Dorsolateral prefrontal cortex (tissue), 120 donors: ENCODE measurements at regions of chr5 and their contacts with region 1.

Region 1: DNA sequence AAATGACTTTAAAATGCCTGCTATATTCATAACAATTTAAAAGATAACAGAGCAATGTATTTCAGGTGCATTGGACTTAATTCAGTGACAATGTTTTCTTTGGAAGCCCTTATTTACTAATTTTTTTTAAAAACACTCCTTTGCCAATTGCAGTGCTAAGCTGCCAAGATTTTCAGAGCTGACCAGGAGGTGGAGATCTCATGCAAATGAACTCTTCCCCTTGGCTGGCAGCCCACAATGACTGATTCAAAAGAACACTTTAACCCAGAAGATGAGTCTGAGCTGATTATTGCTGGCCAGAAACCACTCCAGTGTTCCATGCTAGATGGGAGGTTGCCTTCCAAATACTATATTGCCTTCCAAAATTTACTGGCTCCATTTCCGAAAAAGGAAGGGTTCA is 128.3 kb upstream of the CCNH start:
- DNase-seq: peak; percentile 38 to 95 (median 79)
- H3K4me3 ChIP-seq: peak overlapping the region in 49 of 59 donors; percentile 0 to 55 (median 28)
- H3K27ac ChIP-seq: peak overlapping the region in 53 of 59 donors; percentile 12 to 77 (median 62)
- H3K27me3 ChIP-seq: no peaks in the 10 kb centered on the region
- CTCF ChIP-seq: peak in 54 of 56 donors; percentile 22 to 77 (median 57)

Region 2: GRCh38 chr5:87432460-87432859 is 108.6 kb before region 1 on chr5:
- intact Hi-C with region 1: loop called in 1 of 2 experiments (anchors 10 kb)
- DNase-seq: no peak
- H3K4me3 ChIP-seq: no peak overlapping the region
- H3K27ac ChIP-seq: no peak overlapping the region
- H3K27me3 ChIP-seq: no peaks in the 10 kb centered on the region
- CTCF ChIP-seq: no peak

Region 3: GRCh38 chr5:87594566-87594965 is 53.5 kb after region 1 on chr5:
- intact Hi-C with region 1: loop called in 1 of 2 experiments (anchors 5 kb)
- DNase-seq: no peak
- H3K4me3 ChIP-seq: no peak overlapping the region
- H3K27ac ChIP-seq: no peak overlapping the region
- H3K27me3 ChIP-seq: no peaks in the 10 kb centered on the region
- CTCF ChIP-seq: no peak

Region 4: GRCh38 chr5:87650284-87650683 is 109.3 kb after region 1 on chr5:
- intact Hi-C with region 1: loop called in 1 of 2 experiments (anchors 5 kb)
- DNase-seq: no peak
- H3K4me3 ChIP-seq: no peak overlapping the region
- H3K27ac ChIP-seq: peak overlapping the region in 2 of 59 donors; percentile 20 to 29
- H3K27me3 ChIP-seq: no peaks in the 10 kb centered on the region
- CTCF ChIP-seq: no peak

Region 5: GRCh38 chr5:87754009-87754757 is 213.2 kb after region 1 on chr5:
- intact Hi-C with region 1: loop called in 1 of 2 experiments (anchors 5 kb)
- DNase-seq: no peak
- H3K4me3 ChIP-seq: peak overlapping the region in 16 of 59 donors; percentile 1 to 39 (median 10)
- H3K27ac ChIP-seq: peak overlapping the region in 54 of 59 donors; percentile 19 to 98 (median 91)
- H3K27me3 ChIP-seq: no peaks in the 10 kb centered on the region
- CTCF ChIP-seq: no peak

Region 6: GRCh38 chr5:87770601-87771121 is 229.6 kb after region 1 on chr5:
- intact Hi-C with region 1: loop called (anchors 2 to 5 kb)
- DNase-seq: peak; percentile 22 to 58 (median 40)
- H3K4me3 ChIP-seq: peak overlapping the region; percentile 8 to 65 (median 45)
- H3K27ac ChIP-seq: peak overlapping the region in 56 of 59 donors; percentile 15 to 86 (median 70)
- H3K27me3 ChIP-seq: no peaks in the 10 kb centered on the region
- CTCF ChIP-seq: peak in 1 of 56 donors; percentile 4

Region 7: GRCh38 chr5:88690409-88691229 is 1149.6 kb after region 1 on chr5:
- intact Hi-C with region 1: loop called in 1 of 2 experiments (anchors 10 kb)
- DNase-seq: peak; percentile 77 to 95 (median 90)
- H3K4me3 ChIP-seq: peak overlapping the region; percentile 46 to 93 (median 70)
- H3K27ac ChIP-seq: peak overlapping the region; percentile 61 to 100 (median 99)
- H3K27me3 ChIP-seq: peaks cover 0 to 13% (median 0%) of the 10 kb centered on the region in 45 donors
- CTCF ChIP-seq: peak; percentile 85 to 99 (median 96)